Activated CD4-positive, alpha-beta T cell treated with anti-CD3 and anti-CD28 coated beads, Interleukin-2, amount 10 ng/mL, durations not matched to agents 24 days and 14 days (primary cell): ENCODE measurements at regions of chr2 and their contacts with region 1.

Region 1: GRCh38 chr2:239326831-239327535 is 73.8 kb downstream of the HDAC4 start:
- DNase-seq: peak; percentile 93
- H3K4me3 Mint-ChIP-seq: peak overlapping the region; percentile 75
- H3K27ac Mint-ChIP-seq: peak overlapping the region; percentile 85
- H3K4me1 Mint-ChIP-seq: peaks cover 74% of the 10 kb centered on the region
- H3K27me3 Mint-ChIP-seq: no peaks in the 10 kb centered on the region

Region 2: GRCh38 chr2:239216614-239217273 is 110.2 kb before region 1 on chr2:
- intact Hi-C with region 1: loop called (anchors 5 kb)
- DNase-seq: peak; percentile 78
- H3K4me3 Mint-ChIP-seq: peak overlapping the region; percentile 77
- H3K27ac Mint-ChIP-seq: peak overlapping the region; percentile 91
- H3K4me1 Mint-ChIP-seq: peaks cover 43% of the 10 kb centered on the region
- H3K27me3 Mint-ChIP-seq: no peaks in the 10 kb centered on the region

Region 3: DNA sequence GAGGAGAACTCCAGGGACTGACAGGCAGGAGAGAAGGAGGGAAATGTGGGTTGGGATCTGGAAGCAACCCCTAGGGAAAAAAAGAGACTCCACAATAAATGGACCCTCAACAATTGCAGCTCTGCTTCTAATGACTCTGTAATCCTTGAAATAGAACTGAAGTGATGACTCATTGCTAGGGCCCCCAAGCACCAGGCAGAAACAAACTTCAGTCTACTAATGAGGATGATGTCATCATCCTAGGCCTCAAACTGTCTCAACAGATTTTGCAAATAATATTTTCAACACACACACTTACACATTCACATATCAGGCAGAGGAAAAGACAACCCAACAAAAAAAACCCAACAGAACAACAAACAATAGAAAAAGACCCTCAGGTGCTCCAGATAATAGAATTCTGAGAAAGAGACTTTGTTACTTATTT is 69.5 kb before region 1 on chr2:
- intact Hi-C with region 1: loop called (anchors 2 kb)
- DNase-seq: no peak
- H3K4me3 Mint-ChIP-seq: peak overlapping the region; percentile 78
- H3K27ac Mint-ChIP-seq: peak overlapping the region; percentile 61
- H3K4me1 Mint-ChIP-seq: peaks cover 74% of the 10 kb centered on the region
- H3K27me3 Mint-ChIP-seq: no peaks in the 10 kb centered on the region

Region 4: GRCh38 chr2:239275044-239275685 is 51.8 kb before region 1 on chr2:
- intact Hi-C with region 1: loop called (anchors 2 kb)
- DNase-seq: peak; percentile 95
- H3K4me3 Mint-ChIP-seq: peak overlapping the region; percentile 79
- H3K27ac Mint-ChIP-seq: peak overlapping the region; percentile 87
- H3K4me1 Mint-ChIP-seq: peaks cover 70% of the 10 kb centered on the region
- H3K27me3 Mint-ChIP-seq: peaks cover 9% of the 10 kb centered on the region

Region 5: DNA sequence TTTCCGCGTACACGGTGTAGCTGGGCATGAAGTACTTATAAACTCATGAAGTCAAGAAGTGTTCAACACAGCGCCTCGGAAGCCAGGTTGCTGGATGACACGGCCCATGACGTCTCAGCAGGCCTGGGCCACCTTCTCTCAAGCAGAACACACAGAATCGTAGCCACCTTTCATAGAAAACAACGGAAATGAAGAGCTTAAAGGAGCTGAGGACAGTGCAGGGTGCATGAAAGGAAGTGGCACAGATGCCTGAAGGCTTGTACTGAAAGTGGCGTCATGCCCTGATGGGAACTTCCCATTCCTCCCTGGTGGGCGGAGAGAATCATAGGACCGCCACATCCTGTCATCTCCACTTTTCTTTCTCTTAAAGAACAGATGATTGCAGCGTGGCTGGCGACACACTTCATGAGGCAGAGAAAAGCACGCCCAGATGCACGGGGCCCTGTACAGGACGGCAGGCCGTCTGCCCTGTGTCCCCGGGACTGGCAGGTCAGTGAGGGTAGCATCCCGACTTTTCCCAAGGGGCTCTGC is 42.7 kb after region 1 on chr2:
- intact Hi-C with region 1: loop called (anchors 2 kb)
- DNase-seq: peak; percentile 95
- H3K4me3 Mint-ChIP-seq: no peak overlapping the region
- H3K27ac Mint-ChIP-seq: no peak overlapping the region
- H3K4me1 Mint-ChIP-seq: peaks cover 11% of the 10 kb centered on the region
- H3K27me3 Mint-ChIP-seq: no peaks in the 10 kb centered on the region